Activated naive CD4-positive, alpha-beta T cell treated with anti-CD3 and anti-CD28 coated beads for 36 hours (primary cell): ENCODE measurements at regions of chr2 and their contacts with region 1.

Region 1: GRCh38 chr2:96509114-96509846 is 4.1 kb upstream of the NEURL3 start:
- DNase-seq: peak; percentile 84
- H3K4me3 Mint-ChIP-seq: no peak overlapping the region
- H3K27ac Mint-ChIP-seq: no peak overlapping the region
- H3K4me1 Mint-ChIP-seq: peaks cover 17% of the 10 kb centered on the region
- H3K27me3 Mint-ChIP-seq: peaks cover 8% of the 10 kb centered on the region

Region 2: GRCh38 chr2:96138179-96139145 is 370.8 kb before region 1 on chr2 and contains the start of gene ASTL:
- CTCF ChIA-PET with region 1: no interaction called
- intact Hi-C with region 1: loop called (anchors 1 kb)
- DNase-seq: peak; percentile 88
- H3K4me3 Mint-ChIP-seq: no peak within 1 kb of the TSS
- H3K27ac Mint-ChIP-seq: peak within 1 kb of the TSS; percentile 82
- H3K4me1 Mint-ChIP-seq: peaks cover 24% of the 10 kb centered on the region
- H3K27me3 Mint-ChIP-seq: no peaks in the 10 kb centered on the region
- total RNA-seq, gene ASTL: 2.5 to 2.6 TPM

Region 3: GRCh38 chr2:96305091-96305978 is 203.9 kb before region 1 on chr2 and contains the start of gene SNRNP200:
- CTCF ChIA-PET with region 1: interaction called, 6 read pairs
- intact Hi-C with region 1: loop called (anchors 1 kb)
- DNase-seq: peak; percentile 92
- H3K4me3 Mint-ChIP-seq: peak within 1 kb of the TSS; percentile 100
- H3K27ac Mint-ChIP-seq: peak within 1 kb of the TSS; percentile 98
- H3K4me1 Mint-ChIP-seq: peaks cover 49% of the 10 kb centered on the region
- H3K27me3 Mint-ChIP-seq: no peaks in the 10 kb centered on the region
- total RNA-seq, gene SNRNP200: 179 to 181 TPM

Region 4: GRCh38 chr2:96407041-96407918 is 102.0 kb before region 1 on chr2:
- CTCF ChIA-PET with region 1: interaction called, 195 read pairs
- intact Hi-C with region 1: loop called (anchors 1 kb)
- DNase-seq: peak; percentile 81
- H3K4me3 Mint-ChIP-seq: no peak overlapping the region
- H3K27ac Mint-ChIP-seq: peak overlapping the region; percentile 71
- H3K4me1 Mint-ChIP-seq: peaks cover 27% of the 10 kb centered on the region
- H3K27me3 Mint-ChIP-seq: no peaks in the 10 kb centered on the region

Region 5: DNA sequence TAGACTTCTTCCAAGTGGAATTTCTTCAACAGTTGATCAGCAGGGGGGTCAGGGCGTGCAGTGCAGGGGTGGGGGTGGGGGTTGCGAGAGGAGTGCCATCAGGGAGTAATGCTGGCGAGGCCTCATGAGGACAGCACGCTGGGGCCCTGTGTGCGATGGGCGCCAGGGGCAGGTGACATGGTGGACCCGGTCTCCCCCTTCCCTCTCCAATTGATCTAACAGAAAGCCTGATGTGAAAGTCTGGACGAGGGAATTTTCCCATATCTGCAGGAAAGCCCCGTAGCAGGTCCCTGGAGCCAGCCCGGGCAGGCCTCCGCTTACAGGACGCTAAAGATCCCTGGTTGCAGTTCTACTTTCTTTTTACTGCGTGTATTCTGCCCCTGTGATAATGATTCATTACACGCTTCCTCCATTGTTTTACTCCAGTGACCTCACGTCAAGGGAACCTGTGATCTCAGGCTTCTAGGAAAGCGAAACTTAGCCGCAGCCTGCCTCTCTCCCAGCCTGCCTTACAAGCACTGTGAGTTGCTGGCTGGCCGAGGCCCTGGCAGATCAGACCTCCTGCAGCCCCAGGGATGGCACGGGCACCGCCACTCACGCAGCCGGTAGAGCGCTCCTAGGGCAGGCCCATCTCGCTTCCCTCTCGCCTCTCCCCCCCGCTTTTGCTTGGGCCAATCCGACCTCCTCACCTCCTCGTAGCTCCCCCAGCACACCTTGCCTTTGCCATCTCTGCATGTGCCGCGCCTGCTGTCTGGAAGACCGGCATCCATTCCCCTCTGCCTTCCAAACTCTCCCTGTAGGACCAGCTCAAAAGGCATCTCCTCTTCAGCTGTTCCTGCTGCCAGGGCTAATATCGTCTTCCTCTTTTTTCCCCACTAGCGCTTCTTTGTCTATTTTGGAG is 23.3 kb before region 1 on chr2:
- CTCF ChIA-PET with region 1: interaction called, 10 read pairs
- intact Hi-C with region 1: loop called (anchors 1 kb)
- DNase-seq: peak; percentile 94
- H3K4me3 Mint-ChIP-seq: peak overlapping the region; percentile 97
- H3K27ac Mint-ChIP-seq: peak overlapping the region; percentile 99
- H3K4me1 Mint-ChIP-seq: peaks cover 49% of the 10 kb centered on the region
- H3K27me3 Mint-ChIP-seq: no peaks in the 10 kb centered on the region

Region 6: GRCh38 chr2:96536445-96537065 is 27.3 kb after region 1 on chr2 and contains the start of gene ARID5A:
- CTCF ChIA-PET with region 1: interaction called, 71 read pairs
- intact Hi-C with region 1: no loop called
- DNase-seq: peak; percentile 96
- H3K4me3 Mint-ChIP-seq: peak within 1 kb of the TSS; percentile 96
- H3K27ac Mint-ChIP-seq: peak within 1 kb of the TSS; percentile 99
- H3K4me1 Mint-ChIP-seq: peaks cover 60% of the 10 kb centered on the region
- H3K27me3 Mint-ChIP-seq: no peaks in the 10 kb centered on the region
- total RNA-seq, gene ARID5A: 349 to 351 TPM